Natural killer cell (primary cell): ENCODE measurements at regions of chr7 and their contacts with region 1.

Region 1: GRCh38 chr7:116929914-116930913 is 23.1 kb upstream of the ST7 start:
- DNase-seq: peak; percentile 69 to 87
- ATAC-seq: peak; percentile 88 to 98 (median 95)
- H3K4me3 ChIP-seq: no peak overlapping the region
- H3K4me3 Mint-ChIP-seq: no peak overlapping the region
- H3K27ac ChIP-seq: no peak overlapping the region
- H3K27ac Mint-ChIP-seq: no peak overlapping the region
- H3K4me1 ChIP-seq: peaks cover 3% of the 10 kb centered on the region
- H3K4me1 Mint-ChIP-seq: peaks cover 0 to 6% of the 10 kb centered on the region in 2 donors
- H3K27me3 ChIP-seq: no peaks in the 10 kb centered on the region
- H3K27me3 Mint-ChIP-seq: peaks cover 0 to 2% of the 10 kb centered on the region in 2 donors
- CTCF ChIP-seq: peak; percentile 95

Region 2: GRCh38 chr7:116953727-116954442 is 23.7 kb after region 1 on chr7:
- intact Hi-C with region 1: loop called (anchors 2 kb)
- DNase-seq: peak; percentile 61 to 81
- ATAC-seq: peak; percentile 72 to 84 (median 78)
- H3K4me3 ChIP-seq: peak overlapping the region; percentile 80
- H3K4me3 Mint-ChIP-seq: peak overlapping the region; percentile 90
- H3K27ac ChIP-seq: peak overlapping the region; percentile 81
- H3K27ac Mint-ChIP-seq: peak overlapping the region; percentile 19 to 84
- H3K4me1 ChIP-seq: peaks cover 11% of the 10 kb centered on the region
- H3K4me1 Mint-ChIP-seq: peaks cover 21% of the 10 kb centered on the region in 2 donors
- H3K27me3 ChIP-seq: no peaks in the 10 kb centered on the region
- H3K27me3 Mint-ChIP-seq: peaks cover 7% of the 10 kb centered on the region in 2 donors
- CTCF ChIP-seq: no peak

Region 3: DNA sequence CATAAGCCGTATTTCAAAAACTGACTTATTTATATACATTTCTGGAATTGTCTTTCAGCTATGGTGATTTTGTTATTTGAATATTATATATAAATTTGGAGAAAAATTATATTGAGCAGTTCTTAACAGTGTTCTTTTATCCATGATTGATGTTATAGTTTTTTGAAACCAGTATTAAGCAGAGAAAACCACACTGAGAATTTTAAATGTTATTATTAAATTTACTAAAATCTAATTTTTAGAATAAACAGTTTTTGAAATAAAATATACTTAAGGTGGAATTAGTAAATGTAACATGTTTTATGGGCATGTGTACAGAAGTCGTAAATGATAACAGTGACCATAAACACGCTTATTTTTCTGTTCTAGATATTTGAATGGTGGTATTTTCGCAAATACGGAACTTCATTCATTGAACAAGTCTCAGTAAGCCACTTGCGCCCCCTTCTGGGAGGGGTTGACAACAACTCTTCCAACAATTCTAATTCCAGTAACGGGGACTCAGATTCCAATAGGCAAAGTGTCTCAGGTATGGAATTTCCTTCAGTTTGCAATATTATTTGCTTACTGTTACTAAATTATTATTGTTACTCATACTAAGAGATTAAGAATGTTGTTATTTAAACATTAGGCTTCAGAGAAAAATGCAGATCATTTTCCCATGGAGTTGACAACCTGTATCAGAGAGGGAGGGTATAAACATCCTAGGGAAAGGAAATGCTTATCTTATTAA is 189.1 kb after region 1 on chr7:
- intact Hi-C with region 1: loop called (anchors 1 kb)
- DNase-seq: peak; percentile 53 to 86
- ATAC-seq: peak; percentile 67 to 70 (median 68)
- H3K4me3 ChIP-seq: no peak overlapping the region
- H3K4me3 Mint-ChIP-seq: no peak overlapping the region
- H3K27ac ChIP-seq: no peak overlapping the region
- H3K27ac Mint-ChIP-seq: no peak overlapping the region
- H3K4me1 ChIP-seq: no peaks in the 10 kb centered on the region
- H3K4me1 Mint-ChIP-seq: peaks cover under 1% of the 10 kb centered on the region in 2 donors
- H3K27me3 ChIP-seq: no peaks in the 10 kb centered on the region
- H3K27me3 Mint-ChIP-seq: no peaks in the 10 kb centered on the region
- CTCF ChIP-seq: peak; percentile 81

Region 4: DNA sequence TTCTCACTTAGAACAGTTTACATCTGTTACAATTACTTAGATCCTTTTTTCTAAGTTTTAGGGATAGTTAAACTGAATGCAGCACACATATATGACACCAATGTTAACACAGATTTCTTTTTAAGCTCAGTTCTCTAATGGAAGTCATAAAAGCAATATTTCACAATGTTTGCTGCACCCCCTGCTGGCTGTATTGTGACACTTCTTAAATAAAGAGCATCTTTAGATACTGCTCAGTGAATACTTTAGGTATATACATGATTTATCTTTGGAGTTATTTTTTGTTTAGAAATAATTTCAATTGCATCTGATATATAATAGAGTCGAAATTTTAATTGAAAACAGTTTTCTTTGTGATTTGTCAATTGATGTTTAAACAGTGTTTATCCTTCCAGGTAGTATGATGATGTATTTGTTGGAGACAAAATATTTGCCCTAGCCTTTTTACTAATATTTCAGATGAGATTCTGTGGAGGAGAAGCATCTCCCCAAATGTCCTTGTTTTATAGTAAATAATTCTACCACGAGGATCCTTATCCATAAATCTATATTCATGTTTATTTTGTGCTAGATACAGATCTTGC is 197.5 kb after region 1 on chr7:
- intact Hi-C with region 1: loop called (anchors 1 kb)
- DNase-seq: peak in 1 of 2 donors; percentile 75
- ATAC-seq: peak; percentile 50 to 65 (median 61)
- H3K4me3 ChIP-seq: no peak overlapping the region
- H3K4me3 Mint-ChIP-seq: no peak overlapping the region
- H3K27ac ChIP-seq: no peak overlapping the region
- H3K27ac Mint-ChIP-seq: no peak overlapping the region
- H3K4me1 ChIP-seq: no peaks in the 10 kb centered on the region
- H3K4me1 Mint-ChIP-seq: peaks cover 6% of the 10 kb centered on the region in 2 donors
- H3K27me3 ChIP-seq: no peaks in the 10 kb centered on the region
- H3K27me3 Mint-ChIP-seq: no peaks in the 10 kb centered on the region
- CTCF ChIP-seq: peak; percentile 96

Region 5: GRCh38 chr7:118153551-118154177 is 1223.5 kb after region 1 on chr7:
- intact Hi-C with region 1: loop called (anchors 5 kb)
- DNase-seq: peak in 1 of 2 donors; percentile 61
- ATAC-seq: peak in 2 of 3 donors; percentile 65 to 69
- H3K4me3 ChIP-seq: no peak overlapping the region
- H3K4me3 Mint-ChIP-seq: no peak overlapping the region
- H3K27ac ChIP-seq: no peak overlapping the region
- H3K27ac Mint-ChIP-seq: no peak overlapping the region
- H3K4me1 ChIP-seq: no peaks in the 10 kb centered on the region
- H3K4me1 Mint-ChIP-seq: no peaks in the 10 kb centered on the region
- H3K27me3 ChIP-seq: no peaks in the 10 kb centered on the region
- H3K27me3 Mint-ChIP-seq: peaks cover 15 to 31% of the 10 kb centered on the region in 2 donors
- CTCF ChIP-seq: peak; percentile 72